Prostate gland (tissue), 2 donors: ENCODE measurements at regions of chr2 and their contacts with region 1.

Region 1: DNA sequence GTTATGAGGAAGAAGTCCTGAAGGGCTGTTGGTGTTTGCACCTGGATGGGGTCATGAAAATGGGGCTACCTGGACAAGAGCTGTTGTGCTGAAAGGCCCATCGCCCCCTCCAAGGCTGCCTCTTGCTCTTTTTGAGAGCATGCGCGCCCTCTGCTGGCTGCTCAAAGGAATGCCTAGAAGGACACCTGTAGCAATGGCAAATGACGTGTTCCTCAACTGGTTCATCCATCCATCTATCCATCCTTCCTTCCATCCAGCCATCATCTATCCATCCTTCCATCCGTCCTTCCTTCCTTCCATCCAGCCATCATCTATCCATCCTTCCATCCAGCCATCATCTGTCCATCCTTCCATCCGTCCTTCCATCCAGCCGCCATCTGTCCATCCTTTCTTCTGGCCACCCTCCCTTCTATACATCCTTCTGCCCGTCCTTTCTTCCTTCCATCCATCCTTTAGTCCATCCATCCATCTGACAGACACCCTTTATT is 17.2 kb upstream of the RPL31 start:
- DNase-seq: peak; percentile 68
- H3K4me3 ChIP-seq: no peak overlapping the region
- H3K27ac ChIP-seq: no peak overlapping the region
- H3K4me1 ChIP-seq: no peaks in the 10 kb centered on the region
- H3K27me3 ChIP-seq: no peaks in the 10 kb centered on the region
- CTCF ChIP-seq: peak; percentile 77 to 91 (median 88)
- POLR2A ChIP-seq: no peak

Region 2: DNA sequence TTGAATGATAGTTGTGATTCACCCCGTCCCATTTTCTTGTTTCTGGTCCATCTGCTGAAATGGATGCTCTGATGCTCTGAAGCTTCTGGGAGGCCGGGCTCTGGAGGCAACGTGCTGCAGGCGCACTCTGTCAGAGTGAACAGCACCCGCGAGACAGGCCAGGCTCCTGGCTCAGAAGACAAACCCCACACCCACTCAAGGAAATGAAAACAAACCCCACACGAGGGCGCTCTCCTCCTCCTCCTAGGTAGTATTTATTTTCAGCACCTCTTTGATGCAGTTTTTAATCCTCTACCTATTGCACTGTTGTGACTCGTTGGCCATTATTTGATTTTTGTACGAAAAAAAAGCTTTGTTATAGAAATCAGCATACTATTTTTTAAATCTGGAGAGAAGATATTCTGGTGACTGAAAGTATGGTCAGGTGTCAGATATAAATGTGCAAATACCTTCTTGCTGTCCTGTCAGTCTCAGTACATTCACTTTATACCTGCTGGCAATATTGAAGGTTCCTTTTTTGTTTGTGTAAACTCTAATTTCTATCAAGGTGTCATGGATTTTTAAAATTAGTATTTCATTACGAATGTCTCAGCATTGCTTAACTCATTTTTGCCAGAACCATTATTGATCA is 557.2 kb before region 1 on chr2:
- intact Hi-C with region 1: loop called (anchors 10 kb)
- DNase-seq: peak; percentile 39
- H3K4me3 ChIP-seq: no peak overlapping the region
- H3K27ac ChIP-seq: no peak overlapping the region
- H3K4me1 ChIP-seq: no peaks in the 10 kb centered on the region
- H3K27me3 ChIP-seq: no peaks in the 10 kb centered on the region
- CTCF ChIP-seq: peak in 3 of 4 experiments; percentile 19 to 41 (median 20)
- POLR2A ChIP-seq: no peak

Region 3: GRCh38 chr2:100571670-100572069 is 413.3 kb before region 1 on chr2:
- intact Hi-C with region 1: no loop called
- DNase-seq: no peak
- H3K4me3 ChIP-seq: no peak overlapping the region
- H3K27ac ChIP-seq: no peak overlapping the region
- H3K4me1 ChIP-seq: no peaks in the 10 kb centered on the region
- H3K27me3 ChIP-seq: no peaks in the 10 kb centered on the region
- CTCF ChIP-seq: no peak
- POLR2A ChIP-seq: no peak

Region 4: DNA sequence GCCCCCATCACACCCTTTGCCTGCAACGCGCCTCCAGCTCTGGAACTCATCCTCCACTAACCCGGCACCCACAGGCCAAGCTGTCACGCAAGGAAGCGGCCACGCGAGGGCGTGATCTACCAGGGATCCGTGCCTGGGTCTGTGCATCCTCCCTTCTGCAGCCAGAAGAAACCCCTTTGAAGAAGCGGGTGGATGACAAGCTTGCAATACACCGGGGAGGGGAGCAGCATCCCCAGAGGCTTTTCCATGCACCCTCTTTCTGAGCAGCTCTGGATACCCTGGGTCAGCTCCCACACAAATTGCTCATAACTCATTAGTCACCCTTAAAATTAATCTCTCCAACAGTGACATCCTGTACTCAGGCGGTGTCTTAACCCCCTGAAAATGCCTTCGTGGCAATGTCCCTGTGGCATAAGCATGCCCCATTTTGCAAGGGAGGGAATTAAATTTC is 374.5 kb before region 1 on chr2:
- intact Hi-C with region 1: loop called (anchors 2 kb)
- DNase-seq: peak; percentile 46
- H3K4me3 ChIP-seq: no peak overlapping the region
- H3K27ac ChIP-seq: no peak overlapping the region
- H3K4me1 ChIP-seq: no peaks in the 10 kb centered on the region
- H3K27me3 ChIP-seq: no peaks in the 10 kb centered on the region
- CTCF ChIP-seq: peak in 3 of 4 experiments; percentile 18 to 73 (median 57)
- POLR2A ChIP-seq: no peak

Region 5: DNA sequence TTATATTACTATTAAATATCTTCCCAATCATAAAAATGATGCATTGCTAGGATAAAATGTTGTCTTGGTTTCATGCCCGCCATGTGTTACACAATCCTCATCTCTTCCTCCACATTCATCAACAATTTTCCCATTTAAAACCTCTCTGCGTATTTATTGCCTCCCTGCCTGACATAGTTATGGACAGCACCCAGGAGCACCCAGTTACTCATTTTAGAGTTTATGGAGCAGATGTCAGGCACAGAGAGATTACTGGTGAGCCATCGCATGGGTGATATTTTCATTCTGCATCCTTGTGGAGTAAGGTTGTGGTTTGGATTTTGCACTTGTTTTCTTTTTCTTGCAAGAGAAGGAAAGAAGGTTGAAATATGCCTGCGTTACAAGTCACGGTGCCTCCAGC is 281.7 kb before region 1 on chr2:
- intact Hi-C with region 1: loop called (anchors 10 kb)
- DNase-seq: no peak
- H3K4me3 ChIP-seq: no peak overlapping the region
- H3K27ac ChIP-seq: no peak overlapping the region
- H3K4me1 ChIP-seq: no peaks in the 10 kb centered on the region
- H3K27me3 ChIP-seq: no peaks in the 10 kb centered on the region
- CTCF ChIP-seq: no peak
- POLR2A ChIP-seq: no peak

Region 6: DNA sequence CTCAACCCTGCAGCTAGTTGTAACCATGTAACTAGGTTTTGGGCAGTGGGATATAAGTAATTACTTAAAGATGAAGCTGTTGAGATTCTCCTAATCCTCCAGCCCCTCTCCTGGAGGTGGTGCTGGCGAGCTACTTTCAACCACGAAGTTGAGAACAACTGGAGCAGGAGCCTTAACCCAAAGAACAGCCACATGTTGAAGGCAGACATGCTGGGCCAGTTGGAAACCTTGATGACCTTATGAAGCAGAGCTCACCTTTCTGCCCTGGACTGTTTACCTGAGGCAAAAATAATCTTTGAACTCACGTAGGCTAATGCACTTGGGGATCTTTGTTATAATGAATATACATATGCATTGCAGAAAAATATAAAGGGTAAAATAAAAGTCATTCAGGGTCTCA is 254.6 kb before region 1 on chr2:
- intact Hi-C with region 1: loop called (anchors 2 kb)
- DNase-seq: peak; percentile 53
- H3K4me3 ChIP-seq: no peak overlapping the region
- H3K27ac ChIP-seq: no peak overlapping the region
- H3K4me1 ChIP-seq: no peaks in the 10 kb centered on the region
- H3K27me3 ChIP-seq: no peaks in the 10 kb centered on the region
- CTCF ChIP-seq: peak; percentile 20 to 71 (median 60)
- POLR2A ChIP-seq: no peak

Region 7: GRCh38 chr2:100818606-100819369 is 166.1 kb before region 1 on chr2:
- intact Hi-C with region 1: loop called (anchors 5 kb)
- DNase-seq: peak; percentile 62
- H3K4me3 ChIP-seq: peak overlapping the region; percentile 72 to 74
- H3K27ac ChIP-seq: peak overlapping the region; percentile 88
- H3K4me1 ChIP-seq: no peaks in the 10 kb centered on the region
- H3K27me3 ChIP-seq: no peaks in the 10 kb centered on the region
- CTCF ChIP-seq: peak in 2 of 4 experiments; percentile 20 to 21
- POLR2A ChIP-seq: peak; percentile 46

Region 8: DNA sequence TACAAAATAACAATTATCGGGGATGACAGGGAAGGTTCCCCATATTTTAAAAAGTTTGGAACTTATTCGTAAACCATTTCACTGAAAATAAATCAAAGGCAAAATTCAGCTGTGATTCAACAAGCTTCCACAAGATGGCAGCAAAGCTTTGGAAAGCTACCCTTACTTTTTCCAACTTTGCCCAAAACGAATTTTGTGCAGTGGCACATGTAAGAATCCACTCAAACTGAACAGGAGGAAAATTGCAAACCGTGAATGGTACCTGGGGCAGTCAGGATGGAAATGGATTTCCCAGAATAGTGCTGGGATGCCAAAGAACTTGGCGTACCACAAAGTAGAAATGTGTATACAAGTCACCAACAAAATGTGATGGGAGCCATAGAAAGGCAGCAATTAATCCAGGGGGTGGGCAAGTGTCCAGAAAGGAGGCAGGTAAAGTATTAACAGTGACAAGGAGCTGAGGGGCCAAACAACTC is 27.8 kb after region 1 on chr2:
- intact Hi-C with region 1: no loop called
- DNase-seq: peak; percentile 33
- H3K4me3 ChIP-seq: no peak overlapping the region
- H3K27ac ChIP-seq: no peak overlapping the region
- H3K4me1 ChIP-seq: peaks cover 1% of the 10 kb centered on the region
- H3K27me3 ChIP-seq: no peaks in the 10 kb centered on the region
- CTCF ChIP-seq: peak; percentile 68 to 89 (median 82)
- POLR2A ChIP-seq: no peak

Region 9: DNA sequence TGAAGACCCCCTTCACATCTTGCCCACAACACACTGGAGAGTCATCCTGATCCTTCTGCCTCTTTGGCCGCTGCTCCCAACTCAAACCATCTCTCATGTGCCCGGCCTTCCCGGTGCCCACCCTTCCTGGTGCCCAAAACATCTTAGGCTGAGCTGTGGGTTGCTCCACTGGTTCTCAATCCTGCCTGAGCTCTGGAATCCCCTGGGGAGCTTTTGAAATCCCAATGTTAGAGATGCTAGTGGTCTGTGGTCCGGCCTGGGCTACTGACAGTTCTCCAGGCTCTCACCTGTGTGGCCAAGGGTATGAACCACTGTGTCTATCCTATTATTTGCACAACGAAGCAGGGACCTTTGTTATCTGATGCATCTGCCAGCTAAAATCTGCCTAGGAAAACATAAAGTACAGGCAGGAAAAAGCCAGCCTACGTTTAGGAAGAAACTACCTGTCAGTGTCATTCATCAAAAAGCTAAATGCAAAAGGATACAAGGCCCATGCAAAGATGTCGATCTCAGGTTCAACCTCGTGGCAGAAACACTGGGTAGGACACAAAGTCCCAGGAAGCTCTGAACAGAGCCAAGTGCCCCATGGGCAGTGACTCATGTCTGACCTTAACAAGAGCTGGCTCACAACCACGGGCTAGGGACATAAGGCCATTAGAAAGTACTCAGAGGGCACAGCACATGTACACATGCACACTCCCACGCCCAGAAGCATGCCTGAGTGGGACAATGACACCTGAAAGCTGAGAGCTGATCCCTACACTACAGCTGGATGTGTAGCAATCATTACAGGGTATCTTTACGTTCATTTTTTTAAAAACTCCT is 135.4 kb after region 1 on chr2:
- intact Hi-C with region 1: no loop called
- DNase-seq: peak; percentile 85
- H3K4me3 ChIP-seq: no peak overlapping the region
- H3K27ac ChIP-seq: peak overlapping the region; percentile 80 to 81
- H3K4me1 ChIP-seq: peaks cover 31% of the 10 kb centered on the region
- H3K27me3 ChIP-seq: no peaks in the 10 kb centered on the region
- CTCF ChIP-seq: no peak
- POLR2A ChIP-seq: peak; percentile 25

Region 10: GRCh38 chr2:102622646-102623045 is 1637.7 kb after region 1 on chr2:
- intact Hi-C with region 1: no loop called
- DNase-seq: no peak
- H3K4me3 ChIP-seq: no peak overlapping the region
- H3K27ac ChIP-seq: peak overlapping the region in 1 of 2 donors; percentile 47
- H3K4me1 ChIP-seq: no peaks in the 10 kb centered on the region
- H3K27me3 ChIP-seq: no peaks in the 10 kb centered on the region
- CTCF ChIP-seq: no peak
- POLR2A ChIP-seq: no peak